Transverse colon (tissue), 4 donors: ENCODE measurements at regions of chr1 and their contacts with region 1.

Region 1: GRCh38 chr1:96845464-96845863 is 123.9 kb downstream of the PTBP2 start:
- DNase-seq: peak; percentile 34
- H3K4me3 ChIP-seq: no peak overlapping the region
- H3K27ac ChIP-seq: no peak overlapping the region
- H3K4me1 ChIP-seq: no peaks in the 10 kb centered on the region
- H3K27me3 ChIP-seq: no peaks in the 10 kb centered on the region
- CTCF ChIP-seq: peak; percentile 44 to 63 (median 45)
- EP300 ChIP-seq: no peak
- POLR2A ChIP-seq: no peak

Region 2: DNA sequence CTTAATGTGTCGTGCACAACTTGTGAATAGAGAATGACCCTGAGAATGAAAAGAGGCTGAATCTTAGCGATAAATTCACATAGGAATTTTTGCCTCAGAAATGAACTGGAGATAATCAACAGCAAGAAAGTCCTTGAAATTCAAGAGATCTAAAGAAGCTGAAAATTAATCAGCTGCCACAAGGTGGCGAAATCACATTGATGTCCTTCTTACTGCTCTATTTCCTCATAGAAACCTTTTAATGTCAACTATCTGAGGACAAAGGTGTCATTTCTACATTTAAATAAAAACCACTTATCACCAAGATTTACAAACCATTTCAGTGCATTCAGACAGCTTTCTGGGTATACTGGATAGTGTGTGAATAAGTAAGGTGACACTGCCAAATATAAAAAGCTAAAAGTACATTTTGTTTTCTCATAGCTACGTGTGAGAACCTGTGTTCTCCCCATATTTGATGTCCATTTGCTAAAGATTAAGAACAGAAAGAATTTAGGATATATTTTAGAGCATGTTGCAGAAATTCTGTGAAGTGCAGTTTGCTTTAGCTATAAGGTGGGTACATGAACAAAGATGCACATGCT is 609.2 kb before region 1 on chr1:
- in situ Hi-C with region 1: loop called in 2 of 4 experiments (anchors 25 kb)
- intact Hi-C with region 1: no loop called
- DNase-seq: peak; percentile 8
- H3K4me3 ChIP-seq: no peak overlapping the region
- H3K27ac ChIP-seq: no peak overlapping the region
- H3K4me1 ChIP-seq: peaks cover 0 to 11% (median 0%) of the 10 kb centered on the region in 4 donors
- H3K27me3 ChIP-seq: no peaks in the 10 kb centered on the region
- CTCF ChIP-seq: peak; percentile 46 to 55 (median 54)
- EP300 ChIP-seq: no peak
- POLR2A ChIP-seq: no peak

Region 3: DNA sequence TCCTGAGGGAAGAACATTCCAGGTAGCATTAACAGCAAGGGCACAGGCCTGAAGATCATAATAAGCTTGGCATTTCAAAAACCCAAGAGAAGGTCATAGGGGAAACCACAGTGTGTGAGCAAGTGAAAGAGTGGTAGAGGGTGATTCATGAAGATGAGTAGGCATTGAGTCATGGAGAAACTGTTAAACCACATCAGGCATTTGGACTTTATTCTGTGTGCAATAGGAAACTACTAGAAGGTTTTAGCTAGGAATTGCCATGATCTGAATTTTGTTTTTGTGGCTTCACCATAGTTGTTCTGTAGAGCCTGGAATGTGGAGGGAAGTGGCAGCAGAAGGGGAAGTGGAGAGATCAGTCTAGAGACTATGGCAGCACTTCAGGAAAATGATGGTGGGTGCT is 482.8 kb before region 1 on chr1:
- in situ Hi-C with region 1: no loop called
- intact Hi-C with region 1: no loop called
- DNase-seq: no peak
- H3K4me3 ChIP-seq: no peak overlapping the region
- H3K27ac ChIP-seq: no peak overlapping the region
- H3K4me1 ChIP-seq: no peaks in the 10 kb centered on the region
- H3K27me3 ChIP-seq: no peaks in the 10 kb centered on the region
- CTCF ChIP-seq: no peak
- EP300 ChIP-seq: no peak
- POLR2A ChIP-seq: no peak

Region 4: DNA sequence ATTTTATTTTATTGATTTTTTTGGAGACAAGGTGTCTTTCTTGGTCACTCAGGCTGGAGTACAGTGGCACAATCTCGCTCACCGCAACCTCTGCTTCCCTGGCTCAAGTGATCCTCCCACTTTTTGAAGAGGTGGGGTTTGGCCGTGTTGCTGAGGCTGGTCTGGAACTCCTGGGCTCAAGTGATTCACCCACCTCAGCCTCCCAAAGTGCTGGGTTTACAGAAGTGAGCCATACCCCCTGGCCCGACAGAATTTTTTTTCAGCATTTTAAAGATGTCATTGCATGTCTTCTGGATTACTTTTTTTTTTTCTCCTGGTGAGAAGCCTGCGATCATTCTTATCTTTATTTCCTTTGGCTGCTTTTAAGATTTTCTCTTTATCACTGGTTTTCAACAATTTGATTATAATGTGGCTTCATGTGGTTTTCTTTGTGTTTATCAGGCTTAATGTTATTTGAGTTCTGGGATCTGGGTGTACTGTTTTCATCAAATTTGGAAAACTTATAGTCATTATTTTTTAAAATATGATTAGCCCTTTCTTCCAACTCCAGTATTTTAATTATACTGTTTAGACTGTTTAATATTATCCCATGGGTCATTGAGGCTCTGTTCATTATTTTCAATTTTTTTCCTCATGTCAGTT is 147.0 kb before region 1 on chr1:
- in situ Hi-C with region 1: no loop called
- intact Hi-C with region 1: no loop called
- DNase-seq: no peak
- H3K4me3 ChIP-seq: no peak overlapping the region
- H3K27ac ChIP-seq: no peak overlapping the region
- H3K4me1 ChIP-seq: no peaks in the 10 kb centered on the region
- H3K27me3 ChIP-seq: no peaks in the 10 kb centered on the region
- CTCF ChIP-seq: no peak
- EP300 ChIP-seq: no peak
- POLR2A ChIP-seq: no peak

Region 5: GRCh38 chr1:96973605-96974004 is 128.1 kb after region 1 on chr1:
- in situ Hi-C with region 1: no loop called
- intact Hi-C with region 1: no loop called
- DNase-seq: no peak
- H3K4me3 ChIP-seq: no peak overlapping the region
- H3K27ac ChIP-seq: no peak overlapping the region
- H3K4me1 ChIP-seq: no peaks in the 10 kb centered on the region
- H3K27me3 ChIP-seq: no peaks in the 10 kb centered on the region
- CTCF ChIP-seq: no peak
- EP300 ChIP-seq: no peak
- POLR2A ChIP-seq: no peak